ENCODE measurements at regions of chr20 and their contacts with region 1.

Region 1: GRCh38 chr20:35092524-35093266 is at the start of gene TRPC4AP:
- DNase-seq: peak; percentile 93
- H3K4me3 Mint-ChIP-seq: peak within 1 kb of the TSS; percentile 84
- H3K27ac Mint-ChIP-seq: peak within 1 kb of the TSS; percentile 96
- H3K4me1 Mint-ChIP-seq: peaks cover 52% of the 10 kb centered on the region
- H3K27me3 Mint-ChIP-seq: no peaks in the 10 kb centered on the region
- total RNA-seq, gene TRPC4AP: 45.8 to 48.3 TPM

Region 2: DNA sequence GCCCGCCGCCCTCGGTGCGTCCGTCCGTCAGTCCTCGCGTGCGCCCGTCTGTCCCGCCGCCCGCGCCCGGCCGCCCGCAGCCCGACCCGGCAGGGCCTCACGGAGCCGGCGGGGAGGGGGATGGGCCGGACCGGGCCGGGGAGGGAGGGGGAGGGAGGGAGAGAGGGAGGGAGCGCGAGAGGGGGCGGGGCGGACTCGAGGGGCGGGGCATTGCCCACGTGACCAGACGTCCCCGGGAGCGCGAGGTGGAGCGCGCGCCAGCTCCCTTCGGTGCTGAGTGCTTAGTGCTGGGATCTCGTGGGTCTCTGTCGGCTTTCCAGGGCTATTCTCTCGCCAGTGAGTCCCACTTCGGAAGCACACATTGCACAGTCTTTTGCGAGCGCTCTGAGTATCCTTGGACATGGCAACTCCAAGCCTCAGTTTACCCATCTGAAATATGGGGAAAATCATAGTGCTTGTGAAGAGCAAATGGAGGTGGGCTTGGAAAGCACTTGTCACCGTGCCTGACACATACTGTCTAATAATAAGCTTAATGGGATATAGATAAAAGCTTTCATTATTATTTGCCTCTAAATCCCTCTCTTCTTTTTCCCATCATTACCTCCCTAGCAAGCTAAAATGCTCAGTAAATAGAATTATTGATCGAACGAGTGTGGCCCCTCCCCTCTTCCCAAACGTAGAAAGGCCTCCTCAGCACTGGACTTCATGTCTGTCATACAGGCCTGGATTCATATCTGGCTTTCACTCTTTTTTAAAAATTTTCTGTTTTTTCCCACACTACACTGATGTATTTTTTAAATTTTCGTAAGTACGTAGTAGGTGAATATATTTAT is 266.9 kb before region 1 on chr20 and contains the start of gene NCOA6:
- CTCF ChIA-PET with region 1: interaction called, 7 read pairs
- POLR2A ChIA-PET with region 1: no interaction called
- intact Hi-C with region 1: loop called (anchors 2 kb)
- DNase-seq: peak; percentile 91
- H3K4me3 Mint-ChIP-seq: peak within 1 kb of the TSS; percentile 99
- H3K27ac Mint-ChIP-seq: peak within 1 kb of the TSS; percentile 94
- H3K4me1 Mint-ChIP-seq: peaks cover 37% of the 10 kb centered on the region
- H3K27me3 Mint-ChIP-seq: no peaks in the 10 kb centered on the region
- total RNA-seq, gene NCOA6: 19.6 to 20.7 TPM

Region 3: GRCh38 chr20:34955232-34956040 is 137.3 kb before region 1 on chr20 and contains the starts of genes GSS and MYH7B:
- CTCF ChIA-PET with region 1: no interaction called
- POLR2A ChIA-PET with region 1: no interaction called
- intact Hi-C with region 1: loop called (anchors 2 kb)
- DNase-seq: peak; percentile 99
- H3K4me3 Mint-ChIP-seq: peak within 1 kb of the TSS; percentile 92
- H3K27ac Mint-ChIP-seq: peak within 1 kb of the TSS; percentile 89
- H3K4me1 Mint-ChIP-seq: peaks cover 24% of the 10 kb centered on the region
- H3K27me3 Mint-ChIP-seq: no peaks in the 10 kb centered on the region
- total RNA-seq, gene GSS: 67.7 to 72.2 TPM
- total RNA-seq, gene MYH7B: 0.50 to 0.61 TPM

Region 4: DNA sequence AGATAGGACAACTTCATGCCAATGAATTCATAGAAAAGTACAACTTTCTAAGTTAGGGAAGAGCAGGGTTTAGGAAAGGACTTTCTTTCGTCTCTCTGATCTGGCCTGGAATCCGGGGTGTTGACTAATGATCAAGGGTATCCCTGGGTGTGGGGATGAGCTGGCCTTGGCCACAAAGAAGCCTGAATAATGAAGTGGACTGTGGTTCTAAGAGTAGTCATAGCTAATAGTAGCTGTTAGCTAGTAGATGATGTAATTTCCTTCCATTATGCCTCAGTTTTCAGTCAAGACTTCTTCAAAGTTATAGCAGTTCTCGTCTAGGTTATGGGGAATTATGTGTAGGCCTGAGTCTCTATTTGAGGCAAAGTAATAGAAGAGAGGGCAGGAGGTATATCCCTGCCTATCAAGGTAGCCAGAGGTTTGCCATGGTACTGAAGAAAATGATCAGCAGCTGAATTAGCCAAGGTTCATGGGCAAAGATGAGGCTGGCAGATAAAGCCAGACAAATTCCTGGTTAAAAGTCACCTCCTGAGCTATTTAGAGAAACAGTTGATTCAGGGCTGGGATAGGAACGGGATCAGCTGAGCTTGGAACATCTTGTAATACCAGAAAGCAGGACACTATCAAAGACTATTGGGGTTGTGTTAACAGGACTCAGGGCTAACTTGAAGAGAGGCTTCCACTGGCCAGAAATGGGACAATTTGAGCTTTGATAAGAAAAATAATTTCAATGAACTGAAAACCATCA is 18.6 kb after region 1 on chr20:
- CTCF ChIA-PET with region 1: interaction called, 11 read pairs
- POLR2A ChIA-PET with region 1: no interaction called
- intact Hi-C with region 1: no loop called
- DNase-seq: no peak
- H3K4me3 Mint-ChIP-seq: no peak overlapping the region
- H3K27ac Mint-ChIP-seq: no peak overlapping the region
- H3K4me1 Mint-ChIP-seq: peaks cover 6% of the 10 kb centered on the region
- H3K27me3 Mint-ChIP-seq: no peaks in the 10 kb centered on the region

Region 5: DNA sequence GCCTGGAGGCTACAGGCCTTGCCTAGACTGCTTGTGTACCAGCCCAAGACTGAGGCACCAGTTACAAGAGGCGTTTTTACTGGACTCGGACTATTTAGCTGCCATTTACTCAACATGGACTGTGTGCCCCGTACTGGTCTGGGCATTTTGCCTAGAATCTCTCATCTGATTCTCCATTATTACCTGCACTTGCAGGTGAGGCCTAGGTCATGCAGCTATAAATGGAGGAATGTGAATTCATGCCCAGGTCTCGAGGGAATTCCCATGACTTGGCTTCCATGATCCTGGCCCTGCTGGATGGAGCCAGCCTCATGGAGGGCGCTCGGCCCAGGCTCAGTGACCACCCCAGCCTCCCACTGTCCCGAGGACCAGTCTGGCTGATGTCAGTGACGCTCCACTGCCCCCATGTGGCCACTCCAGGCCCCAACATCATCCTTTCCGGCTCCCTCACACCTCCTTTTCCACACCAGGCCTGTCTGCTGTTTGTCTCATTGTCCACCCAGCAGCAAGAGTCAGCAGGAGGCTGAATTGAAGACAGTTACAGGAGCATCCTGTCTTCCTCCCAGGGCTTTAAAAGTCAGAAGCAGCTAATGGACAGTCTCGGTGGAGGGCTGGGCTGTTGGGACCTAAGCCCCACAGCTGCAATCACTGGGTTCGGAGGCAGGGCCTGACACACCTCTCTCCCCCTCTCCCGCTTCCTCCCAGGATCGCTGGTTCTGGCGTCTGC is 176.5 kb after region 1 on chr20:
- CTCF ChIA-PET with region 1: interaction called, 15 read pairs
- POLR2A ChIA-PET with region 1: no interaction called
- intact Hi-C with region 1: no loop called
- DNase-seq: peak; percentile 65
- H3K4me3 Mint-ChIP-seq: no peak overlapping the region
- H3K27ac Mint-ChIP-seq: no peak overlapping the region
- H3K4me1 Mint-ChIP-seq: peaks cover 2% of the 10 kb centered on the region
- H3K27me3 Mint-ChIP-seq: no peaks in the 10 kb centered on the region

Region 6: DNA sequence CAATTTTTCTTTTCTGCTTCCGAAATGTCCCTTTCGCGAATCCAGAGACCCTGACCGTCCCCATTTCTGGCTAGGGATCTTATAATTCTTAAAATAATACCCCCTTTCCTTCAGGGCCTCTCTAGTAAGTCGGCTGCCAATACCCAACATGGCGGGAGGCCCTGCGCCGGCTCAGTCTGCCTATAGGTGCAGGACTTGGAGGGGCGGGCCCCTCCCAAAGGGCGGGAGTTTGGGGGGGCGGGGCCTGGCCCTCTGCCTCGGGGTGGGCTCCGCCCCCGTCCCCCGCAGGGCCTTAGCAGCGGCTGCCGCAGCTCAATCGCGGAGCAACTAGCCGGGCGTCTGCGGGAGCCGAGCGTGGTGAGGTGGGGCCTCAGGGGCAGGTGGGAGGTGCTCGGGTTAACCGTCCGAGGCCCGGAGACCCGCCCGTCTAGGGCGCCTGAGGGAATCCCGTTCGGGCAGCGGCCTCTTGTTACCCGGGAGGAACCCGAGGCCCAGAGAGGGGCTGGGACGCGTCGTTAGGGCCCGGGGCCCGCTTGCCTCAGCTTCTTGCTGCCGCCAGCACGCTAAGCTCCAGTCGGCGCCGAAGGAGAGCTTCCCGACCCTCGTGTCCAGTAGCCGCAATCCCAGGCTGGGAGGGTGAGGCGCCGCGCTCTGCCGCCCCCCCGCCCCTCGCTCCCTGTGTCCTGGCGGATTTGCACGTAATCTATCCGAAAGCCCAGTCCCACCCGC is 362.4 kb after region 1 on chr20 and contains the start of gene CEP250:
- CTCF ChIA-PET with region 1: interaction called, 3 read pairs
- POLR2A ChIA-PET with region 1: no interaction called
- intact Hi-C with region 1: loop called (anchors 10 kb)
- DNase-seq: peak; percentile 95
- H3K4me3 Mint-ChIP-seq: peak within 1 kb of the TSS; percentile 88
- H3K27ac Mint-ChIP-seq: peak within 1 kb of the TSS; percentile 97
- H3K4me1 Mint-ChIP-seq: peaks cover 28% of the 10 kb centered on the region
- H3K27me3 Mint-ChIP-seq: no peaks in the 10 kb centered on the region
- total RNA-seq, gene CEP250: 47.2 to 60.8 TPM